Caco-2 (cell line): ENCODE measurements at regions of chr12 and their contacts with region 1.

Region 1: GRCh38 chr12:949453-950191 is at the start of gene RAD52:
- DNase-seq: peak; percentile 99 to 100
- H3K4me3 ChIP-seq: peak within 1 kb of the TSS; percentile 69
- H3K4me3 Mint-ChIP-seq: peak within 1 kb of the TSS; percentile 98
- H3K27ac Mint-ChIP-seq: peak within 1 kb of the TSS; percentile 99
- H3K4me1 ChIP-seq: peaks cover 27% of the 10 kb centered on the region
- H3K4me1 Mint-ChIP-seq: peaks cover 32% of the 10 kb centered on the region
- H3K27me3 ChIP-seq: no peaks in the 10 kb centered on the region
- H3K27me3 Mint-ChIP-seq: no peaks in the 10 kb centered on the region
- CTCF ChIP-seq: peak; percentile 97 to 99
- total RNA-seq, gene RAD52: 53.8 and 53.9 TPM in 2 replicates

Region 2: GRCh38 chr12:569803-570434 is 379.7 kb before region 1 on chr12:
- CTCF ChIA-PET with region 1: interaction called, 17 read pairs
- POLR2A ChIA-PET with region 1: interaction called, 12 read pairs
- intact Hi-C with region 1: loop called (anchors 1 kb)
- DNase-seq: peak; percentile 90 to 97
- H3K4me3 ChIP-seq: peak overlapping the region; percentile 80
- H3K4me3 Mint-ChIP-seq: peak overlapping the region; percentile 80
- H3K27ac Mint-ChIP-seq: peak overlapping the region; percentile 81
- H3K4me1 ChIP-seq: peaks cover 35% of the 10 kb centered on the region
- H3K4me1 Mint-ChIP-seq: peaks cover 35% of the 10 kb centered on the region
- H3K27me3 ChIP-seq: no peaks in the 10 kb centered on the region
- H3K27me3 Mint-ChIP-seq: no peaks in the 10 kb centered on the region
- CTCF ChIP-seq: peak; percentile 98 to 99

Region 3: DNA sequence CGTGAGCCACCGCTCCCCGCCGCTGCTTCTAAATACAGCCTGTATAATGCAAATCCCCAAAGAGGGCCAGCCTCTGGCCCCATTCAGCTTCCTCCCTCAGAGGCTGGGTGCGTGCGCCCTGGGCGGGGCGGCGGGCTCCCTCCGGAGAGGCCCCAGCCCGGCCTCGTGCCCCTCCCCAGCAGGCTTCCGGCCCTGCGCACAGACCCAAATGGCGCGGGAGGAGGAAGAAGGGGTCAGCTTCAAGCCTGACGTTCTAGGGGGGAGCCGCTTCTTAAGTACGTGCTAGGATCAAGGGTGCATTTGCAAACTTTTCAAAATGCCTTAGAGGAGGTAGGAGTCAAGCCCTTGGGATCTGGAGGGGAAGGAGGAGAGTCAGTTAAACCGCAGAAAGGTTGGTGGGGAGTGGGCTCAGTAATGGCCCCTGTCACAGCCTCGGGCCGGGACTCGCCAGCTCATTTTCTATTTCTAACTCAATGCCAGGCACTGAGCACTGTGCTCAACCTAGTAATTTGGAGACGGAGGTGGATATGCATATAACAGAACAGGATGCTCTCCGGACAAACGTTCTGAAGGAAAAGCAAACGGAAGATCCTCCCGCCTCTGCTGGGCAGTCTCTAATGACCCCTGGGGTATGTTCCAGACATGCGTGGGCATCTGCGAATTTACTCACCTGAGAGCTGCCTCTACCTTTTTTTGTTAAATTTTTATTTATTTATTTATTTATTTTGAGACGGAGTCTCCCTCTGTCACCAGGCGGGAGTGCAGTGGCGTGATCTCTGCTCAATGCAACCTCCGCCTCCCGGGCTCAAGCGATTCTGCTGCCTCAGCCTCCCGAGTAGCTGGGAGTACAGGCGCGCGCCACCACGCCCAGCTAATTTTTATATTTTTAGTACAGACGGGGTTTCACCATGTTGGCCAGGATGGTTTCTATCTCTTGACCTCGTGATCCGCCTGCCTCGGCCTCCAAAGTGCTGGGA is 318.7 kb before region 1 on chr12:
- CTCF ChIA-PET with region 1: interaction called, 5 read pairs
- POLR2A ChIA-PET with region 1: no interaction called
- intact Hi-C with region 1: loop called (anchors 1 kb)
- DNase-seq: no peak
- H3K4me3 ChIP-seq: no peak overlapping the region
- H3K4me3 Mint-ChIP-seq: peak overlapping the region; percentile 56
- H3K27ac Mint-ChIP-seq: peak overlapping the region; percentile 88
- H3K4me1 ChIP-seq: peaks cover 67% of the 10 kb centered on the region
- H3K4me1 Mint-ChIP-seq: peaks cover 57% of the 10 kb centered on the region
- H3K27me3 ChIP-seq: no peaks in the 10 kb centered on the region
- H3K27me3 Mint-ChIP-seq: no peaks in the 10 kb centered on the region
- CTCF ChIP-seq: no peak

Region 4: DNA sequence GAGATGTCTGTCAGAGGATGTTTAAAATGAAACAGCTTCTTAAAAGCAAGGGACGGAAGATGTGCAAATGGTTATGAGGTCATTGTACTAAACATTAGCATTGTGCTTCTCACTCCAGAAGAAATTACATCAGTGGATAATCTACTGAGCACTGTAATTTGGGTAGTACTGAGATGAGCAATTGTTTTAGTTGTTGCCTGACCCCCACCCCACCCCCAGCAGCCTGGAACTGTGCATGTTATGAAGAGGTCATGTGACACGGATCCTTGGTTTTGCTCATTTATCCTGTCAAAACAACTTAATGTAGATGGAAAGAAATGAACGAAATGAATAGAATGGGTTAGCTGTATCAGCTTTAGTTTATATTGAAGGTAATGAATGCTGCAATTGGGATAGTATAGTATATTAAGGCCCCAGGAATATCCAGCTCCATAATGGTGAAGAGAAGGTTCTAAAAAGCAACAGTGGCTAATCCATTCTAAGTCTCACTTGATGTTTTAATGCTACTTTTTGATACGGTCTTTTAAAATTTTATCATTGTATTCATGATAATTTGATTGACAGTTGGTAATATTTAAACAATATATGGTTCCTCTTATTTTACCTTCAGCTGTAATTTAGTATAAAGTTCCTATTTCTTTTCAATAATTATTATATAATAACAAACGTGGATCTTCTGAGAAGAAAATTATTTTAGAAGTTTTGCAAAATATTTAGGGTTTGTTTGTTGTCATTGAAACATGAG is 138.8 kb before region 1 on chr12:
- CTCF ChIA-PET with region 1: interaction called, 4 read pairs
- POLR2A ChIA-PET with region 1: no interaction called
- intact Hi-C with region 1: loop called (anchors 1 kb)
- DNase-seq: no peak
- H3K4me3 ChIP-seq: no peak overlapping the region
- H3K4me3 Mint-ChIP-seq: no peak overlapping the region
- H3K27ac Mint-ChIP-seq: no peak overlapping the region
- H3K4me1 ChIP-seq: peaks cover 9% of the 10 kb centered on the region
- H3K4me1 Mint-ChIP-seq: peaks cover 17% of the 10 kb centered on the region
- H3K27me3 ChIP-seq: no peaks in the 10 kb centered on the region
- H3K27me3 Mint-ChIP-seq: no peaks in the 10 kb centered on the region
- CTCF ChIP-seq: no peak

Region 5: GRCh38 chr12:968545-968944 is 18.9 kb after region 1 on chr12:
- CTCF ChIA-PET with region 1: interaction called, 10 read pairs
- POLR2A ChIA-PET with region 1: no interaction called
- intact Hi-C with region 1: loop called (anchors 2 kb)
- DNase-seq: no peak
- H3K4me3 ChIP-seq: no peak overlapping the region
- H3K4me3 Mint-ChIP-seq: no peak overlapping the region
- H3K27ac Mint-ChIP-seq: no peak overlapping the region
- H3K4me1 ChIP-seq: peaks cover 5% of the 10 kb centered on the region; the same call in 1 of the 2 replicates
- H3K4me1 Mint-ChIP-seq: peaks cover 6% of the 10 kb centered on the region
- H3K27me3 ChIP-seq: no peaks in the 10 kb centered on the region
- H3K27me3 Mint-ChIP-seq: no peaks in the 10 kb centered on the region
- CTCF ChIP-seq: no peak

Region 6: DNA sequence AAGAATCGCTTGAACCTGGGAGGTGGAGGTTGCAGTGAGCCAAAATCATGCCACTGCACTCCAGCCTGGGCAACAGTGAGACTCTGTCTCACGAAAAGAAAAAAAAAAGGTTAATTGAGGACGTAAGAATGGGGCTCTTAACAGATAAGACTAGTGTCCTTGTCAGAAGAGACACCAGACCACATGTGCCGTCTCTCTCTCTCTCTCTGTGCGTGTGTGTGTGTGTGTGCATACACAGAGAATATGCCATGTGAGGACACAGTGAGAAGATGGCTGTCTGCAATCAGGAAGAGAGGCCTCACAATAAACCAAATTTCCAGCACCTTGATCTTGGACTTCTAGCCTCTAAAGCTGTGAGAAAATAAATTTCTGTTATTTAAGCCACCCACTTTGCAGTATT is 29.7 kb after region 1 on chr12:
- CTCF ChIA-PET with region 1: no interaction called
- POLR2A ChIA-PET with region 1: no interaction called
- intact Hi-C with region 1: no loop called
- DNase-seq: no peak
- H3K4me3 ChIP-seq: no peak overlapping the region
- H3K4me3 Mint-ChIP-seq: no peak overlapping the region
- H3K27ac Mint-ChIP-seq: no peak overlapping the region
- H3K4me1 ChIP-seq: no peaks in the 10 kb centered on the region
- H3K4me1 Mint-ChIP-seq: no peaks in the 10 kb centered on the region
- H3K27me3 ChIP-seq: no peaks in the 10 kb centered on the region
- H3K27me3 Mint-ChIP-seq: no peaks in the 10 kb centered on the region
- CTCF ChIP-seq: no peak

Region 7: GRCh38 chr12:990661-991349 is 41.2 kb after region 1 on chr12 and contains the start of gene ERC1:
- CTCF ChIA-PET with region 1: interaction called, 17 read pairs
- POLR2A ChIA-PET with region 1: interaction called, 19 read pairs
- intact Hi-C with region 1: loop called (anchors 1 kb)
- DNase-seq: peak; percentile 93 to 97
- H3K4me3 ChIP-seq: peak within 1 kb of the TSS; percentile 80
- H3K4me3 Mint-ChIP-seq: peak within 1 kb of the TSS; percentile 84
- H3K27ac Mint-ChIP-seq: peak within 1 kb of the TSS; percentile 91
- H3K4me1 ChIP-seq: peaks cover 26% of the 10 kb centered on the region
- H3K4me1 Mint-ChIP-seq: peaks cover 40% of the 10 kb centered on the region
- H3K27me3 ChIP-seq: no peaks in the 10 kb centered on the region
- H3K27me3 Mint-ChIP-seq: no peaks in the 10 kb centered on the region
- CTCF ChIP-seq: peak in 1 of 2 experiments; percentile 9
- total RNA-seq, gene ERC1: 88.4 and 111 TPM in 2 replicates

Region 8: GRCh38 chr12:1583421-1584078 is 633.9 kb after region 1 on chr12:
- CTCF ChIA-PET with region 1: no interaction called
- POLR2A ChIA-PET with region 1: no interaction called
- intact Hi-C with region 1: loop called (anchors 5 kb)
- DNase-seq: peak; percentile 82 to 87
- H3K4me3 ChIP-seq: no peak overlapping the region
- H3K4me3 Mint-ChIP-seq: no peak overlapping the region
- H3K27ac Mint-ChIP-seq: no peak overlapping the region
- H3K4me1 ChIP-seq: no peaks in the 10 kb centered on the region
- H3K4me1 Mint-ChIP-seq: peaks cover 3% of the 10 kb centered on the region
- H3K27me3 ChIP-seq: no peaks in the 10 kb centered on the region
- H3K27me3 Mint-ChIP-seq: no peaks in the 10 kb centered on the region
- CTCF ChIP-seq: peak; percentile 88 to 99